ENCODE measurements at regions of chr3 and their contacts with region 1.

Region 1: DNA sequence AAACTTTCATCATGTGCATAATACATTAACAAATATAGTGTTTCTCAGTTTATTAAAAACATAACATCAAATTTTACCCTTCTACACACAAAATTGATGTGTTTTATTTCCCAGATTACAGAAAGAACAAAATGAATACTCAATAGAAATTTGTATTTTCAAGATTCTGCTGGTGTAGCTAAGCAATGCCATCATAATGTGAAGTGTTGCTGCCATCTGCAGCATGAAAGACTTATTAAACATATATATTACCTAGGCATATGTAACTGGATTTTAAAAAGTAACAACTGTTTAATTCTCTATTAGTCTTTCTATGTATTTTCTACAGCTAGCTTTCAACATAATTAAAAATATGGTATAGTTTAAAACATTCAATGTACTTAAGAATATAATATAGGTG is 27.5 kb downstream of the PLSCR5 start:
- DNase-seq: peak in 1 of 2 experiments; percentile 70
- ATAC-seq: peak; percentile 56 to 82; a peak in 4 of 6 replicates
- H3K4me3 ChIP-seq: no peak overlapping the region
- H3K27ac ChIP-seq: no peak overlapping the region
- H3K4me1 ChIP-seq: no peaks in the 10 kb centered on the region
- CTCF ChIP-seq: peak; percentile 82
- EP300 ChIP-seq: no peak
- POLR2A ChIP-seq: no peak
- RAD21 ChIP-seq: peak; percentile 90 to 93

Region 2: DNA sequence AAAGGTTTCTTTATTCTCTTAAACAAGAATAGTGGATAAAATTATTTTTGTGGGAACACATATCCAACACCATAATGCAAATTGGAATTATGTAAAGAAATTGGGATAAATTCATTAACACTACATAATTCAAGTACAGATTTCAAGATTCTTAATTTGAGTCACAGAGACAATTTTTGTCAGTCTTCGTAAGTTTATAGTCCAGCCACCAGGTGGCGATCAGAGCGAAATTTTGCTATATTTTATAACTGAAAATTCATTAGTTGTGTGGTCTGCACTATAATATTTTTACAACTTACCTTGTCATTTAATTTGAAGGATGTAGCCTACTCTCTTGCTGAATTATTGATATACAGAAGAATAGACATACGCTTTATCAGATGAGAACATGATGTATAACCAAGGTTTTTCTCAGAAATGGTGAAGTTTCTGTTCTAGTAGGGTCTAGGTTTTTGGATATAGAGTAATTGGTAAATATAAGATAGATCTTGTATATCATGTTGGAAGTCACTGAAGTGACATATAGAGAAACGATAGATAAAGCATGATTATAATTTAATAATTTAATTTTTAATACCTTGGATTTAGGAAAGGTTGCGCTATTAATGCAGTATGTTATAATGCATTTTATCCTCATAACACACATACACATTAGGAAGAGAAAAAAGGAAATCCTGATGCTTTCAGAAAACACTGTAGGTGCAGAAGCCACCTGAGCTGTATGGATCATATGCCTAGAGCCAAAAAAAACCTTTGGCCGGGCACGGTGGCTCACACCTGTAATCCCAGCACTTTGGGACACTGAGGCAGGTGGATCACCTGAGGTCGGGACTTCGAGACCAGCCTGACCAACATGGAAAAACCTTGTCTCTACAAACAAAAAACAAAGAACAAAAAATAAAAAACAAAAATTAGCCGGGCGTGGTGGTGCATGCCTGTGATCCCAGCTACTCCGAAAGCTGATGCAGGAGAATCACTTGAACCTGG is 358.5 kb before region 1 on chr3:
- CTCF ChIA-PET with region 1: interaction called, 35 read pairs
- POLR2A ChIA-PET with region 1: no interaction called
- DNase-seq: peak; percentile 15 to 40
- ATAC-seq: no peak
- H3K4me3 ChIP-seq: no peak overlapping the region
- H3K27ac ChIP-seq: peak overlapping the region in 1 of 2 experiments; percentile 32; a peak in 2 of 6 replicates
- H3K4me1 ChIP-seq: peaks cover 43% of the 10 kb centered on the region
- CTCF ChIP-seq: peak; percentile 93
- EP300 ChIP-seq: no peak
- POLR2A ChIP-seq: no peak
- RAD21 ChIP-seq: peak; percentile 81 to 86

Region 3: DNA sequence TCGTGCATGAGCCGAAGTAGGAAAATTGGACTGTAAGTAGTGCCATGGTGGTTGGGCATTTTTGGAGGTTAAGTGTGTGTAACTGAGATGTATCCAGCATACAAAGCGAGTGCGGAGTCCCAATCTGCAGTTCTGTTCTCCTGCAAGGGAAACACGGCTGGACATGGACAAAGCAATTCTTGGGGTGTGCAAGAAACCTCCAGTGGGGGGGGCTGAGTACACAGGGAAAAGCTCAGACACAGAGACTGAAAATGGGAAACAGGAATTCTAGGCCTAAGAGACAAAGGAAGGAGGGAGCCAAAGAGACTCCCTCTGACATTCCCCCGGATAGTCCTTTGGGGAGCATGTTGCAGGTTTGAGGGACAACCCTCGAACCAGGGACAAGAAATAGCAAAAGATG is 243.5 kb before region 1 on chr3:
- CTCF ChIA-PET with region 1: interaction called, 12 read pairs
- POLR2A ChIA-PET with region 1: no interaction called
- DNase-seq: peak in 1 of 2 experiments; percentile 32
- ATAC-seq: peak in 1 of 2 experiments; percentile 66; a peak in 3 of 6 replicates
- H3K4me3 ChIP-seq: no peak overlapping the region
- H3K27ac ChIP-seq: no peak overlapping the region
- H3K4me1 ChIP-seq: no peaks in the 10 kb centered on the region
- CTCF ChIP-seq: peak; percentile 42
- EP300 ChIP-seq: no peak
- POLR2A ChIP-seq: no peak
- RAD21 ChIP-seq: peak; percentile 66 to 77

Region 4: DNA sequence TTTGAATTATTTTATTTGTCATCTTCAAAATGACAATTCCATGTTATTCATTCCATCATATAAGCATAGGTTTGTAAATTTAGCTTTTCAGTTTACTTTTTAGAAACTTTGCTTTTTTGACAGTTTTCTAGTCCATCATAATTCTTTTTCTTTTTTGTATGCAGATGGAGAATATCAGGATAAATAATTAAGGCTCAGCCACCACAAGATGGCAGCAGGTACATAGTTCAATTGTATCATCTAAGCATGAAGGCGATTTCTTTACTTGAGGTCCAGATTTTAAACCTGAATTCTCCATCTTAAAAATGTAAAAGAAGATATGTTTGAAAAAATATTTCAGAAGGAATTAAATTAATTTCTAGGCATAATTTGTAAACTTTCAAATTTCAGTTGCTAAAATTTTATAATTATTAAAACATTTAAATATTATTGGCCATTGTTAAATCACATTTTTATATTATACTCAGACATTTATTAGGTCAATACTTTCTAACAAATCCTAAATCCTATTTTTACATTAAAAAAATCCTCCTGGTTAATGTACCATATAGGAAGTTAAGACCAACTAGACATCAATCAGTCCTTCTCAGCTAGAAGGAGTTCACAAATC is 12.3 kb after region 1 on chr3:
- CTCF ChIA-PET with region 1: interaction called, 10 read pairs
- POLR2A ChIA-PET with region 1: no interaction called
- DNase-seq: peak; percentile 31 to 60
- ATAC-seq: peak in 1 of 2 experiments; percentile 72; a peak in 3 of 6 replicates
- H3K4me3 ChIP-seq: no peak overlapping the region
- H3K27ac ChIP-seq: no peak overlapping the region
- H3K4me1 ChIP-seq: no peaks in the 10 kb centered on the region
- CTCF ChIP-seq: peak; percentile 88
- EP300 ChIP-seq: no peak
- POLR2A ChIP-seq: no peak
- RAD21 ChIP-seq: peak; percentile 67 to 69